Caco-2 (cell line): ENCODE measurements at regions of chrX and their contacts with region 1.

Region 1: DNA sequence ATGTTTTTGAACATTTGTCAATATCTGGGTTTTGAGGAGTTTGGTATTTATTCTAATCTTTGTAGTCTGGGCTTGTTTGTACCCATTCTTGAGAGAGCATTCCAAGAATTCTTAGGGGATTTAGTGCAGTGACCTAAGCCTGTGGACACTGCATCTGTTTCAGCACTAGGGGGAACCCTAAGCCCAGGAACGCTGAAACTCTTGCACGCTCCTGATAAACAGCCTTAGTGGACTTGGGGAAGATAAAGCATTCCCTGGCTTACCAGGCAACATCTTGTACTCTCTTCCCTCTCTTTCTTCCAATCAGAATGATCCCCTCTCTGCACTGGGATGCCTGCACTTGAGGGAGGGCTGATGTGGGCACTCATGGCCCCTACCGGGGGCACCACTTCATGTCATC is 654.9 kb upstream of the HTR2C start:
- DNase-seq: peak; percentile 56 to 67
- H3K4me3 ChIP-seq: no peak overlapping the region
- H3K4me3 Mint-ChIP-seq: no peak overlapping the region
- H3K27ac Mint-ChIP-seq: peak overlapping the region; percentile 70
- H3K4me1 ChIP-seq: no peaks in the 10 kb centered on the region
- H3K4me1 Mint-ChIP-seq: peaks cover 8% of the 10 kb centered on the region
- H3K27me3 ChIP-seq: no peaks in the 10 kb centered on the region
- H3K27me3 Mint-ChIP-seq: no peaks in the 10 kb centered on the region
- CTCF ChIP-seq: peak; percentile 55 to 68

Region 2: GRCh38 chrX:114075073-114075673 is 146.2 kb after region 1 on chrX:
- CTCF ChIA-PET with region 1: no interaction called
- POLR2A ChIA-PET with region 1: no interaction called
- intact Hi-C with region 1: loop called (anchors 1 kb)
- DNase-seq: no peak
- H3K4me3 ChIP-seq: no peak overlapping the region
- H3K4me3 Mint-ChIP-seq: no peak overlapping the region
- H3K27ac Mint-ChIP-seq: no peak overlapping the region
- H3K4me1 ChIP-seq: no peaks in the 10 kb centered on the region
- H3K4me1 Mint-ChIP-seq: no peaks in the 10 kb centered on the region
- H3K27me3 ChIP-seq: no peaks in the 10 kb centered on the region
- H3K27me3 Mint-ChIP-seq: no peaks in the 10 kb centered on the region
- CTCF ChIP-seq: peak; percentile 26 to 27

Region 3: DNA sequence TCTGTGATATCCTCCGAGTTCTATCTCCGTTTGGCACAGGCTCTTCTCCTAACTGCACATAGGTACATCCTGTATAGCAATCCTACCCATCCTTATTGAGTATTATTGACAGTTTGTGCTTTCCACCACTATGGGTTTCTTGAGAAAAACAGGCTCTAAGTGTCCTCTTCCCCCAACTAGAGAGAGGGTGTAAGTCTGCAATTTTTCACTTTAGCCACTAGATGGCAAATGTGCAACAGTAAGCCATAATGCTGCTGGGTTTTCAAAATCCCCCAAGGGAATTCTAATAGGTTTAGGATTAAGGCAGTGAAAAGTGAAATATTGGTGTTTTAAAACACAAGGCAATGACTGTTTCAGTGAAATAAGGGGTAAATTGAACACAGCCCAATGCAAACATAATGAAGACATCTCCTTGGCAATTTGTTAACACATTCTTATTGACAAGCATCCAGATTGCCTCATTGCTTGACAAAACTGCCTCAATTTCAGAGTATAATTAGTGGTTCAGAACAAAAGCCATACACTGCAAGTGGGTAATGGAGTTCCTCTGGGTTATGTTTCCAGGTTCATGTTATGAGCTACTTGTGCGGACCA is 415.8 kb after region 1 on chrX:
- CTCF ChIA-PET with region 1: no interaction called
- POLR2A ChIA-PET with region 1: no interaction called
- intact Hi-C with region 1: loop called (anchors 1 kb)
- DNase-seq: peak in 1 of 2 experiments; percentile 4
- H3K4me3 ChIP-seq: no peak overlapping the region
- H3K4me3 Mint-ChIP-seq: no peak overlapping the region
- H3K27ac Mint-ChIP-seq: no peak overlapping the region
- H3K4me1 ChIP-seq: no peaks in the 10 kb centered on the region
- H3K4me1 Mint-ChIP-seq: no peaks in the 10 kb centered on the region
- H3K27me3 ChIP-seq: no peaks in the 10 kb centered on the region
- H3K27me3 Mint-ChIP-seq: no peaks in the 10 kb centered on the region
- CTCF ChIP-seq: peak; percentile 26 to 57

Region 4: DNA sequence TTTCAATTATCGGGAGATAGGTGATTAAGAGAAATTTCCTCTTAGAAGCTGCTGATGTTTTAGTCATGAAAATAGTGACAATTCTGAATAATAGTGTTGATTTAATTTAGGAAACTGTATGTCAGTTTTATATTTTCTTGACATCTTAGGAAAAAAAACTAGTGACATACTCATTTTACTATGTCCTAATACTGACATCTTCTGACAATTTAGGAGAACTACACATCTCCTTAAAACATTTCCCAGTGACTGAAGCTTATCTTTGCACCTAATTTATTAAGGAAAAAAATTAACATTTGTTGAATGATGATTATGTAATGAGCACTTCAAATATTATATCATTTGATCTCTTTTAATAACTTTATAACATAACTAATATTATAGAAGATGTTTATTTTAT is 1218.2 kb after region 1 on chrX:
- CTCF ChIA-PET with region 1: no interaction called
- POLR2A ChIA-PET with region 1: no interaction called
- intact Hi-C with region 1: loop called (anchors 2 kb)
- DNase-seq: no peak
- H3K4me3 ChIP-seq: no peak overlapping the region
- H3K4me3 Mint-ChIP-seq: no peak overlapping the region
- H3K27ac Mint-ChIP-seq: no peak overlapping the region
- H3K4me1 ChIP-seq: no peaks in the 10 kb centered on the region
- H3K4me1 Mint-ChIP-seq: no peaks in the 10 kb centered on the region
- H3K27me3 ChIP-seq: no peaks in the 10 kb centered on the region
- H3K27me3 Mint-ChIP-seq: peaks cover 3% of the 10 kb centered on the region
- CTCF ChIP-seq: peak; percentile 13 to 31